Sciatic nerve (tissue), 2 donors: ENCODE measurements at regions of chr1 and their contacts with region 1.

Region 1: GRCh38 chr1:55658917-55659316 is 443.8 kb upstream of the USP24 start:
- DNase-seq: no peak
- ATAC-seq: no peak

Region 2: DNA sequence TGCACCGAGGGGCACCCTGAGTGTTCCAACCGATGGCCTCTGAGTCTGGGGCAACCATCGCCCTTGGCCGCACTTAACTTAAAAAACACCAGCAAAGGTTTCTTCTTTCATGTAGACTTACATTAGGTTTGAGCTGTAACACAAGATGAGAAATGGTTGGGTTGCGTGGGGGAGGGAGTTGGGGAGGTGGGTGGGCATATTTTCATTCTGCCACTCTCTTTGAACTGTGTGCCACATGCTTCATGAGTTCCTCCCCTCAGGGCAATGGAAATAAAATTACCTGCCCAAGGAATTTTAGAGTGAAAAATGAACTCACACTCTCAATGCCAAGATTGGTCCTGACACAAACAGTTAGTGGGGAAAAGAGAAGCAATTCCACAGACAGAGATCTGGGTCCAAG is 13.6 kb before region 1 on chr1:
- intact Hi-C with region 1: loop called (anchors 1 kb)
- DNase-seq: no peak
- ATAC-seq: no peak

Region 3: DNA sequence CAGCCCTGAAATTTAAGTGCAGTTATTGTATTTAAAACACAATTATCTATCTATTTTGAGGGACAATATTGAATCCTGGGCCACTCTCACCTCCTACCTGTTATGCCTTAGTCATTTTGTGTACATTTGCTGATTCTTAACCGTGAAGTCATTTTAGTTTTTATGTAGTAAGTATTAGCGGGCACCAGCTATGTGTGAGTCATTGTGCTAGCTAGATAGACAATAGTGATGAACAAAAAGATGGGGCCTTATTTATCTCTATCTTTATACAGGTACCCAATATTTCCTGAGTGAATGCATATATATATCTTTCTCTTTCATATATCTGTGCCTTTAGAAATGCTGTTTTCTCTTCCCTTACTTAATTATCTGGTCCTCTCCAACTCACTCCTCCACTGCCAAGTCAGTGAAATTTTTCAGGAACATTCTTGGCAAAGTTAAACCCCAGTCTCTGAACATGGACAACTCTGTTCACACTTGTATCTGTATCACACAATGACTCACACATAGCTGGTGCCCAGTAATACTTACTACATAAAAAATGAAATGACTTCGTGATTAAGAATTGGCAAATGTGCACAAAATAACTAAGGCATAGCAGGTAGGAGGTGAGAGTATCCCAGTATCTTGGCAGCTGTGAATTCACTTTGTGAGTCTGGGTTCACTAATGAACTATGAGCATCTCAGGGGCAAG is 1472.9 kb after region 1 on chr1:
- intact Hi-C with region 1: no loop called
- DNase-seq: no peak
- ATAC-seq: no peak